ENCODE measurements at regions of chr5 and their contacts with region 1.

Region 1: GRCh38 chr5:104178829-104179456 is 616.4 kb upstream of the NUDT12 start:
- DNase-seq: no peak
- H3K4me3 ChIP-seq: no peak overlapping the region
- H3K27ac ChIP-seq: no peak overlapping the region
- H3K4me1 ChIP-seq: no peaks in the 10 kb centered on the region
- H3K27me3 ChIP-seq: no peaks in the 10 kb centered on the region
- CTCF ChIP-seq: peak in 3 of 4 experiments; percentile 17 to 47 (median 39)
- POLR2A ChIP-seq: no peak

Region 2: GRCh38 chr5:103587185-103587748 is 591.7 kb before region 1 on chr5:
- intact Hi-C with region 1: loop called (anchors 5 kb)
- DNase-seq: no peak
- H3K4me3 ChIP-seq: no peak overlapping the region
- H3K27ac ChIP-seq: no peak overlapping the region
- H3K4me1 ChIP-seq: no peaks in the 10 kb centered on the region
- H3K27me3 ChIP-seq: no peaks in the 10 kb centered on the region
- CTCF ChIP-seq: peak in 3 of 4 experiments; percentile 9 to 32 (median 28)
- POLR2A ChIP-seq: no peak

Measured in prostate gland (tissue), 2 donors.